ENCODE measurements at regions of chr19 and their contacts with region 1.

Region 1: DNA sequence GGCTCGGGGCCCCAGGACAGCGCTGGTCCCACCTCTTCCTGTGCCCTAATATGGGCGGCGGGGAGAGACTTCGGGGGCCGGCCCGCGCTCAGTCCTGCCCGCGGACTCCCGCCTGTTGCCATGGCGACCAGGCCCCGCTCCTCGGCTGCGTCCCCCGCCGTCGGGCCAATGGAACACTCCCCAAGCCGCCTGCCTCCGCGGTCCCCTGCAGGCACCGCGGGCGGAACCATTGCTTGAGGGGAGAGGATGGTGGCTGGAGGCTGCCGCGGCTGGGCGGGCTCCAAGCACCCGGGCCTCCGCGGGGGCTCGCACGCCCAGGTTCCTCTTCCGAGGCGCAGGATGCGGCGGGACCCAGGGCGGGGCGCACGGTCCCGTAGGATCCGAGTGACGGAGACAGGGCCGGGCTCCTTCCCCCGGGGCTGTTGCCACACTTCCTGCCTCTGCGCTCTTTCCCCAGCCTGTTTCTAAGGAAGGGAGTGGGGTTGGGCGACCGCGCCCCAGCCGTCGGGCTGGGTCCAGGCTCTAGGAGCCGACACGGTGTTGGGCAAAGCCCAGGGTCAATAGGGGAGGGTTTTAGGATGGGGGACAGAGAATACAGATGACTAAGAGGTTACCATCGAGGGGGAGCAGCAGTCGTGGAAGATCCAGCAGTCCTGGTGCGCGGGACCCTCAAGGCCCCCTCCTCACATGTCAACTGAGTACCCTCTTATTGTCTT is 1.2 kb upstream of the JUNB start:
- DNase-seq: peak; percentile 88 to 97 (median 92)
- ATAC-seq: peak; percentile 70
- H3K4me3 ChIP-seq: peak overlapping the region; percentile 83
- H3K27ac ChIP-seq: peak overlapping the region; percentile 89
- H3K4me1 ChIP-seq: peaks cover 46 to 82% of the 10 kb centered on the region in 2 experiments
- H3K27me3 ChIP-seq: no peaks in the 10 kb centered on the region
- CTCF ChIP-seq: no peak
- EP300 ChIP-seq: no peak; the same call in 1 of the 2 replicates
- POLR2A ChIP-seq: 0 out of 2 replicates have a peak, but pooled peaks have one; percentile 17
- RAD21 ChIP-seq: no peak

Region 2: GRCh38 chr19:12564016-12564664 is 225.9 kb before region 1 on chr19:
- CTCF ChIA-PET with region 1: no interaction called
- POLR2A ChIA-PET with region 1: no interaction called
- in situ Hi-C with region 1: no loop called
- intact Hi-C with region 1: loop called (anchors 10 kb)
- DNase-seq: peak; percentile 84 to 86 (median 85)
- ATAC-seq: peak; percentile 91
- H3K4me3 ChIP-seq: no peak overlapping the region
- H3K27ac ChIP-seq: no peak overlapping the region
- H3K4me1 ChIP-seq: no peaks in the 10 kb centered on the region; a peak in 1 of 5 replicates
- H3K27me3 ChIP-seq: no peaks in the 10 kb centered on the region
- CTCF ChIP-seq: peak; percentile 89 to 96 (median 94)
- EP300 ChIP-seq: no peak
- POLR2A ChIP-seq: no peak
- RAD21 ChIP-seq: peak; percentile 37 to 83

Region 3: DNA sequence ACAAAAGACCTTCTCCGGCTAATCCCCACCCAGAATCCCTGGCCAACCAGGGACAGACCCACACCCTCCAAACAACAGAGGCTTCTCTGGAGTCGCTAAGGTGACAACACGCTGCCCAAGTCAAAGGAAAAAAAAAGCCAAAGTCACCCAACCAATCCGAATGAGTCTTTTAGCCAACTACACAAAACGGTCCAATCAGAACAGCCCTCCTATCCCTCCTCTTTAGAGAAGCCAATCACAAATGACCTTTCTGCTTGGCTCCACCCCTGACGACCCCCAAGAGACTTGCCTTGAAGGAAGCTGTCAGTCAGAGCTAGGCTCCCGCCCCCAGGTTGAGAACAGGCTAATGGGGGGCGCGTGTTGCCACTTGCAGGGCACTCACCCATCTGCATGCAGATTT is 87.0 kb before region 1 on chr19:
- CTCF ChIA-PET with region 1: no interaction called
- POLR2A ChIA-PET with region 1: no interaction called
- in situ Hi-C with region 1: no loop called
- intact Hi-C with region 1: no loop called
- DNase-seq: peak; percentile 77 to 90 (median 86)
- ATAC-seq: peak; percentile 87
- H3K4me3 ChIP-seq: no peak overlapping the region
- H3K27ac ChIP-seq: no peak overlapping the region
- H3K4me1 ChIP-seq: peaks cover 0 to 27% of the 10 kb centered on the region in 2 experiments; a peak in 1 of 5 replicates
- H3K27me3 ChIP-seq: no peaks in the 10 kb centered on the region
- CTCF ChIP-seq: no peak
- EP300 ChIP-seq: no peak
- POLR2A ChIP-seq: 0 out of 2 replicates have a peak, but pooled peaks have one; percentile 0
- RAD21 ChIP-seq: no peak

Region 4: GRCh38 chr19:12722566-12723380 is 67.3 kb before region 1 on chr19:
- CTCF ChIA-PET with region 1: no interaction called
- POLR2A ChIA-PET with region 1: interaction called, 30 read pairs
- in situ Hi-C with region 1: no loop called
- intact Hi-C with region 1: no loop called
- DNase-seq: peak; percentile 88 to 100 (median 94)
- ATAC-seq: peak; percentile 83
- H3K4me3 ChIP-seq: peak overlapping the region; percentile 82
- H3K27ac ChIP-seq: peak overlapping the region; percentile 87
- H3K4me1 ChIP-seq: peaks cover 10 to 44% of the 10 kb centered on the region in 2 experiments; a peak in 3 of 5 replicates
- H3K27me3 ChIP-seq: no peaks in the 10 kb centered on the region
- CTCF ChIP-seq: no peak
- EP300 ChIP-seq: no peak
- POLR2A ChIP-seq: peak; percentile 85
- RAD21 ChIP-seq: no peak

Region 5: GRCh38 chr19:12757544-12758274 is 32.4 kb before region 1 on chr19:
- CTCF ChIA-PET with region 1: no interaction called
- POLR2A ChIA-PET with region 1: interaction called, 11 read pairs
- in situ Hi-C with region 1: no loop called
- intact Hi-C with region 1: no loop called
- DNase-seq: peak; percentile 84 to 88 (median 84)
- ATAC-seq: peak; percentile 97
- H3K4me3 ChIP-seq: peak overlapping the region; percentile 38
- H3K27ac ChIP-seq: no peak overlapping the region
- H3K4me1 ChIP-seq: peaks cover 5 to 40% of the 10 kb centered on the region in 2 experiments; a peak in 3 of 5 replicates
- H3K27me3 ChIP-seq: peaks cover 2 to 11% of the 10 kb centered on the region in 2 experiments; a peak in 3 of 5 replicates
- CTCF ChIP-seq: peak; percentile 94 to 97 (median 96)
- EP300 ChIP-seq: peak; percentile 9; the same call in 1 of the 2 replicates
- POLR2A ChIP-seq: no peak
- RAD21 ChIP-seq: peak; percentile 67 to 79

Region 6: DNA sequence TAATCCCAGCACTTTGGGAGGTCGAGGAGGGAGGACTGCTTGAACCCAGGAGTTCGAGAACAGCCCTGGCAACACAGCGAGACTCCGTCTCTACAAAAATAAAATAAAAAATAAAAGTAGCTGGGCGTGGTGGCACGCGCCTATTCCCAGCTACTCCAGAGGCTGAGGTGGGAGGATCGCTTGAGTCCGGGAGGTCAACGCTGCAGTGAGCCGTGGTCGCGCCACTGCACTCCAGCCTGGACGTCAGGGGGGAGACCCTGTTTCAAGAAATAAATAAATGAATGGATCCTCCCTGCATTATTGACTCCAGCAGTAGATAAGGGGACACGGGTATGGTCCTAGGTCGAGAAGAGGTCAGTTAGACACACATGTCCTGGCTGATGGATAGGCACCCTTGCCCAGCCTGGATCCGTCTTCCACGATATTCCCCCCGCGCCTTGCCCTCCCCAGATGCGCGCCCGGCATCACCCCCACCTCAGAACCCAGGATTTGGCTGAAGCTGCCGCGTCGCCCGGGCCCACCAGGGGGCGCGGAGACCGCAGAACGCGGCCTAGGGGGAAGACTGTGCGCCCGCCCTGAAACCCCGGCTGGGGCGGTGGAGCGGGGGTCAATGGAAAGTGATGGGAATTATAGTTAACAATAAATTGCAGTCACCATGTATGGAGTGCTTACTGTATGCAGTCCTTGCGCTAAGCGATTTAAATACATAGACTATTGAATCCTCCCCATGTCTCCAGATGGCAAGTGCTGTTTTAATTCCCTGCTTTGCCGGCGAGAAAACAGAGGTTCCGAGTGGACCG is 12.6 kb before region 1 on chr19:
- CTCF ChIA-PET with region 1: interaction called, 8 read pairs
- POLR2A ChIA-PET with region 1: interaction called, 44 read pairs
- in situ Hi-C with region 1: no loop called
- intact Hi-C with region 1: no loop called
- DNase-seq: peak; percentile 72 to 89 (median 78)
- ATAC-seq: peak; percentile 76
- H3K4me3 ChIP-seq: peak overlapping the region; percentile 37
- H3K27ac ChIP-seq: peak overlapping the region; percentile 68
- H3K4me1 ChIP-seq: peaks cover 23 to 56% of the 10 kb centered on the region in 2 experiments; a peak in 4 of 5 replicates
- H3K27me3 ChIP-seq: no peaks in the 10 kb centered on the region
- CTCF ChIP-seq: peak; percentile 90 to 96 (median 93)
- EP300 ChIP-seq: peak; percentile 15; the same call in 1 of the 2 replicates
- POLR2A ChIP-seq: no peak
- RAD21 ChIP-seq: peak; percentile 93 to 94

Region 7: GRCh38 chr19:12933287-12934072 is 143.4 kb after region 1 on chr19 and contains the start of gene FARSA:
- CTCF ChIA-PET with region 1: no interaction called
- POLR2A ChIA-PET with region 1: no interaction called
- in situ Hi-C with region 1: no loop called
- intact Hi-C with region 1: no loop called
- DNase-seq: peak; percentile 82 to 96 (median 86)
- ATAC-seq: peak; percentile 85
- H3K4me3 ChIP-seq: peak within 1 kb of the TSS; percentile 86
- H3K27ac ChIP-seq: peak within 1 kb of the TSS; percentile 96
- H3K4me1 ChIP-seq: peaks cover 29 to 46% of the 10 kb centered on the region in 2 experiments
- H3K27me3 ChIP-seq: no peaks in the 10 kb centered on the region
- CTCF ChIP-seq: peak in 1 of 3 experiments; percentile 28; a peak in 2 of 6 replicates
- EP300 ChIP-seq: no peak
- POLR2A ChIP-seq: peak; percentile 96
- RAD21 ChIP-seq: no peak
- polyA plus RNA-seq, gene FARSA: 32.6 to 40.0 TPM